ENCODE measurements at regions of chr11 and their contacts with region 1.

Region 1: DNA sequence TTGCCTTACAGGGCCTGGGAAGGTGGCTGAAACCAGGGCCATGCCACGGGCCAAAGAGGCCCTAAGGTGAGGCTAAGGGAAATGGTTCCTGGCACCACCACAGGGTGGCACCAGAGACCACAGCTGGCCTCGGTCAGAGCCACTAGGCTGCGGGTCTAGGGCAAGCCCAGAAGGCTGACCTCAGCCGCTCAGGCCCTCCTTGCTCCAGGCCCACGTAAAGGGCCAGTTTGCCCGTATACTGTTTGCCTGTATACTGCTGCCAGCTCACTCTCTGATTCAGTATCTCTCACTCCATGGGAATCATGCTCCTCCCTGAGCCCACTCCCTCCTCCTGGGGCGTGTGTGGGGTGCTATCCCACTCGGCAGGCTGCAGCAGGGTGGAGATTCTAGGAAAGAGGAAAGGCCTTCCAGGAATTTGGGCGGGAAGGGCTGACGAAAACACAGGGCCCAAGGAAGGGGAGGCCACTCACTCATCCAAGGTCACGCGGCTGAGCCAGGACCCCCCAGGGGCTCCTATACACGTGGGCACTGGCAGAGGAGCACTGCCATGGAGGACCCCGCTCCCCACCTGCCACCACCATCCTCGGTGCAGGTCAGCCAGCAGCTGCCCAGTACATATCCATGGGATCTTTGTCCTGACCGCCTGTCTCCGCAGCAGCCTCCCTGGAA is 62.4 kb downstream of the NECTIN1 start:
- DNase-seq: peak; percentile 78 to 90 (median 86)
- H3K4me3 ChIP-seq: no peak overlapping the region
- H3K27ac ChIP-seq: peak overlapping the region in 53 of 59 donors; percentile 10 to 97 (median 67)
- H3K27me3 ChIP-seq: no peaks in the 10 kb centered on the region
- CTCF ChIP-seq: peak; percentile 77 to 99 (median 96)

Region 2: DNA sequence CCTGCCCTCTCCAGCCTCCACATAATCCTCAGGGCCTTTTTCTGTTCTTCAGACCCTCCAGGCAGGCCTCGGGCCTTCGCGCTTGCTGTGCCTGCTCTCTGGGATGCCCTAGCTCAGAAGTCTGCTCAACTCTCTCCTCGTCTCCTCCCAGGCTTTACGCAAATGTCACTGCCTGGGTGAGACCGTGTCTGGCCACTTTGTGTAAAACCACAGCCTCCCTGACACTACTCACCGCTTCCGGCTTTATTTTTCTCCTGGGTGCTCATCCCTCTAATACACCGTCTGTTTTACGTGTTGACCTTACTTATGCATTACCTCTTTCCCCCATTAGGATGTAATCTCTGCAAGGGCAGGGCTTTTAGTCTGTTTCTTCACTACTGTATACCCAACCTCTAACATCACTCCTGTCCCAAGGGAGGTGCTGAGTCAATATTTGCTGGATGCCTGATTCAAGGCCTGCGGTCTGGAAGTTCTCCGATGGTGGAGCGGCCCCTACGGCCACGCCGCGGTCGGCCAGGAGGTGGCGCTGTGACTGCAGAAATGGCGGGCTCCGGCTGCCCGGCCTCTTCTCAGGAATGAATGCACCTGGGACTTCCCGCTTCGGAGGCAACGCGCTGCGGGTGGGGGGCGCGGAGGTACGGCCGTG is 185.5 kb before region 1 on chr11:
- intact Hi-C with region 1: loop called (anchors 2 to 5 kb)
- DNase-seq: peak; percentile 67 to 93 (median 86)
- H3K4me3 ChIP-seq: peak overlapping the region in 43 of 59 donors; percentile 3 to 53 (median 33)
- H3K27ac ChIP-seq: peak overlapping the region in 3 of 59 donors; percentile 15 to 44 (median 22)
- H3K27me3 ChIP-seq: no peaks in the 10 kb centered on the region
- CTCF ChIP-seq: peak; percentile 87 to 100 (median 99)

Region 3: GRCh38 chr11:119584193-119585037 is 82.2 kb before region 1 on chr11:
- intact Hi-C with region 1: loop called in 1 of 2 experiments (anchors 10 kb)
- DNase-seq: peak; percentile 15 to 83 (median 62)
- H3K4me3 ChIP-seq: peak overlapping the region; percentile 40 to 82 (median 65)
- H3K27ac ChIP-seq: peak overlapping the region in 57 of 59 donors; percentile 20 to 92 (median 74)
- H3K27me3 ChIP-seq: no peaks in the 10 kb centered on the region
- CTCF ChIP-seq: peak in 13 of 56 donors; percentile 3 to 45 (median 14)

Region 4: GRCh38 chr11:119728651-119729580 is 62.3 kb after region 1 on chr11 and contains the start of gene NECTIN1:
- intact Hi-C with region 1: loop called (anchors 1 kb)
- DNase-seq: peak; percentile 80 to 92 (median 88)
- H3K4me3 ChIP-seq: peak within 1 kb of the TSS; percentile 61 to 95 (median 84)
- H3K27ac ChIP-seq: peak within 1 kb of the TSS; percentile 72 to 95 (median 90)
- H3K27me3 ChIP-seq: no peaks in the 10 kb centered on the region
- CTCF ChIP-seq: peak; percentile 77 to 99 (median 95)
- total RNA-seq, gene NECTIN1: 45.3 to 136 (median 78.1) TPM

Region 5: DNA sequence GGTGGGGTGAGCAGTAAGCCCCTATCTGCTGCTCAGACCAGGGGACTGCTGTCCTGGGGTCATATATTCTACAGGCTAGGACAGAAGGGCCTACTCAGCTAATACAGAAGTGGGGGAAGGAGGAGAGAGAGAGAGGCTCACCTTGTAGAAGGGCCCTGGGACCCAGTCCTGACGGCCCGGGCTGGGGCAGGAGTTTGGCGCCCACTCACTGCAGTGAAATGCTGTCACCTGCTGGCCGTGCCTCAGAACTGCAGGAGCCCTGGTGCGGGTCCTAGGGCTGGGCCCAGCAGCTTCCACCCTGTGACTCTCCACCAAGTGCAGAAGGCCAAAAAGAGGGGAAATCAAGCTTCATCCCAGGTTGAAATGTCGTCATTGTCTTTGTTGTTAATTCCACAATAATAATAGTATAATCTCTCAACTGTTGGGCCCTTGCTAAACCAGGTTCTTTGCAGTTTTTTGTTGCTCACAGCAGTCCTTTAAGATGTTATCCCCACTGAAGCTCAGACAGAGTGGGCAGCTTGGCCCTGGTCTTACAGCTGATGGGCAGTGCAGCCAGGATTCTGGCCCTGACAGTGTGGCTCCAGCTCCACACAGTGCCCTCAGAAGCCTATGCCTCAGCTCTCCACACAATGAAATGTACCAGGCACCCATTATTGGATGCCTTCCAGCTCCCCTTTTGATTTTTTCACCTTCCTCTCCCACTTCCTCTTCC is 441.7 kb after region 1 on chr11:
- intact Hi-C with region 1: loop called (anchors 1 to 5 kb)
- DNase-seq: peak; percentile 78 to 90 (median 84)
- H3K4me3 ChIP-seq: peak overlapping the region in 1 of 59 donors; percentile 6
- H3K27ac ChIP-seq: peak overlapping the region in 52 of 59 donors; percentile 3 to 86 (median 64)
- H3K27me3 ChIP-seq: peaks cover 0 to 3% (median 0%) of the 10 kb centered on the region in 45 donors
- CTCF ChIP-seq: peak; percentile 93 to 100 (median 100)

Region 6: GRCh38 chr11:120229451-120230424 is 563.1 kb after region 1 on chr11:
- intact Hi-C with region 1: loop called in 1 of 2 experiments (anchors 10 kb)
- DNase-seq: peak in 2 of 10 donors; percentile 58 to 60
- H3K4me3 ChIP-seq: no peak overlapping the region
- H3K27ac ChIP-seq: peak overlapping the region in 4 of 59 donors; percentile 11 to 24 (median 23)
- H3K27me3 ChIP-seq: peaks cover 0 to 6% (median 0%) of the 10 kb centered on the region in 45 donors
- CTCF ChIP-seq: peak; percentile 52 to 95 (median 82)

Measured in dorsolateral prefrontal cortex (tissue), 120 donors.